ENCODE measurements at regions of chr12 and their contacts with region 1.

Region 1: GRCh38 chr12:76031537-76032073 is at the start of gene PHLDA1:
- DNase-seq: peak; percentile 98
- ATAC-seq: peak; percentile 81
- H3K4me3 Mint-ChIP-seq: peak within 1 kb of the TSS; percentile 89
- H3K27ac Mint-ChIP-seq: peak within 1 kb of the TSS; percentile 97
- H3K4me1 Mint-ChIP-seq: peaks cover 57% of the 10 kb centered on the region
- H3K27me3 Mint-ChIP-seq: peaks cover 4% of the 10 kb centered on the region
- total RNA-seq, gene PHLDA1: 36.8 to 95.6 TPM

Region 2: DNA sequence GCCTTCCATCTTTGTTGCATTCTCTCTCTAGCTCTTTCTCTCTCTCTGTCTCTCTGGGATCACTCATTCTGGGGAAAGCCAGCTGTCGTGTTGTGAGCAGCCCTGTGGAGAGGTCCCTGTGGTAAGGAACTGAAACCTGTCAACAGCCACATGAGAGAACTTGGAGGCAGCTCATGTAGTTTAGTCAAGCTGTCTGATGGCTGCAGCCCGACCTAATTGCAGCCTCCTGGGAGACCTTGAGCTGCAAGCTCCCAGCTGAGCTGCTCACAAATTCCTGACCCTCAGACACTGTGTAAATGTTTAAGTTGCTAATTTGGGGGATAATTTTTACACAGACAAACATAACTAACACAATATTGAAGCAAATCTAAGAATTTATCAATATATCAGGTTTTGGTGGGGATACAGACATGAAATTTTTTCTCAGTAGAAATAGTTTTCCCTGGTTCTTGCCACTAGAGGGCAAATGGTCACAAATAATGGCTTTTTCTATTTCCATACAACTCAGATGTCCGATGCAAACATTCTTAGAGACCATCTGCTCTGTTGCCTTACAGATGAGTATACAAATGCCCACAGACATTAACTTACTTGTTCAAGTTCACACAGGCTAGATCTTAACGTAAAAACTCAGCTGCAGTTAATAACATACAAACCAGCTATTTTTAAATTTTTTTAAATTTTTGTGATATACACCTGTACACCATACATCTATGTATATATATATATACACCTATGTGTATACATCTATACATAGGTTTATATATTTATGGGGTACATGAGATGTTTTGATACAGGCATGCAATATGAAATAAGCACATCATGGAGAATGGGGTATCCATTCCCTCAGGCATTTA is 504.7 kb before region 1 on chr12:
- CTCF ChIA-PET with region 1: interaction called, 42 read pairs
- DNase-seq: peak; percentile 58
- ATAC-seq: peak; percentile 76
- H3K4me3 Mint-ChIP-seq: no peak overlapping the region
- H3K27ac Mint-ChIP-seq: peak overlapping the region; percentile 54
- H3K4me1 Mint-ChIP-seq: peaks cover 10% of the 10 kb centered on the region
- H3K27me3 Mint-ChIP-seq: peaks cover 22% of the 10 kb centered on the region

Region 3: GRCh38 chr12:75923964-75924666 is 107.5 kb before region 1 on chr12:
- CTCF ChIA-PET with region 1: interaction called, 14 read pairs
- DNase-seq: no peak
- ATAC-seq: no peak
- H3K4me3 Mint-ChIP-seq: no peak overlapping the region
- H3K27ac Mint-ChIP-seq: peak overlapping the region; percentile 74
- H3K4me1 Mint-ChIP-seq: peaks cover 22% of the 10 kb centered on the region
- H3K27me3 Mint-ChIP-seq: no peaks in the 10 kb centered on the region

Region 4: DNA sequence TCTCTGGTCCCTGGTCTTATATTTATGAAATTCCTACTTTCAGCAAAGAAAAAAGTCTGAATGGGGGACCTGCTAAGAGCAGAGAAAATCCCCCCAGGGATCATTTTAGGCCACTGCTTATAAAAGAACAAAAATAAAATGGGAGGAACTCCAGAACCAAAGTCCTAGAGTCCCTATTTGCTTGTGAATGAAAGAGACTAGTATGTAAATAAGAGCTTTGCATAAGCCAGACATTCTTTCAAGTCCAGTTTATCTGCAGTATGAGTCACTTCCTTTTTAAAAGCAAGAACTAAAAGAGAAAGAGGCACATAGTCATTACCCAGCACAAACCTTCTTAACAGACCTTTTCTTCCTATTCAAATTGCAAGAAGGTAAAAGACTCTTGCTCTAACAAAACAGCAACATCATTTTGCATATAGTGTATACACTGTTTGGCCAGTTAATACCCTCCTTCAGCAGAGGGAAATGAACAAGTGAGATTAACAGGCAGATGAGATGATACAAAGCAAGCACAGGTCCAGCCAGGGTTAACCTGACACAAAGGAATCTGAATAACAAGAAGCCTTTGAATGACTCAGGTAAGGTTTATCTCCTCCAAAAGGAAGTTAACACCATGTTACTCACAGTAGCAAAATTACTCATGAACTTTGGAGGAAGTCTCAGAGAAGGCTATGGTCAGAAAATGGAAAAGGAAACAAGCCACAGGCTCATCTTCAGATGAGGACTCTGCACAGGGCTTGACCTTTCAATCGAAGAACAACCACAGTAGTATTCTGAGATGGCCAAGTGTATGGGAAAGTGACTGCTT is 87.3 kb before region 1 on chr12:
- CTCF ChIA-PET with region 1: interaction called, 14 read pairs
- DNase-seq: peak; percentile 52
- ATAC-seq: peak; percentile 90
- H3K4me3 Mint-ChIP-seq: peak overlapping the region; percentile 43
- H3K27ac Mint-ChIP-seq: peak overlapping the region; percentile 99
- H3K4me1 Mint-ChIP-seq: peaks cover 40% of the 10 kb centered on the region
- H3K27me3 Mint-ChIP-seq: no peaks in the 10 kb centered on the region

Region 5: GRCh38 chr12:75977952-75978671 is 53.5 kb before region 1 on chr12:
- CTCF ChIA-PET with region 1: interaction called, 37 read pairs
- DNase-seq: peak; percentile 93
- ATAC-seq: peak; percentile 91
- H3K4me3 Mint-ChIP-seq: peak overlapping the region; percentile 9
- H3K27ac Mint-ChIP-seq: peak overlapping the region; percentile 94
- H3K4me1 Mint-ChIP-seq: peaks cover 65% of the 10 kb centered on the region
- H3K27me3 Mint-ChIP-seq: no peaks in the 10 kb centered on the region

Region 6: DNA sequence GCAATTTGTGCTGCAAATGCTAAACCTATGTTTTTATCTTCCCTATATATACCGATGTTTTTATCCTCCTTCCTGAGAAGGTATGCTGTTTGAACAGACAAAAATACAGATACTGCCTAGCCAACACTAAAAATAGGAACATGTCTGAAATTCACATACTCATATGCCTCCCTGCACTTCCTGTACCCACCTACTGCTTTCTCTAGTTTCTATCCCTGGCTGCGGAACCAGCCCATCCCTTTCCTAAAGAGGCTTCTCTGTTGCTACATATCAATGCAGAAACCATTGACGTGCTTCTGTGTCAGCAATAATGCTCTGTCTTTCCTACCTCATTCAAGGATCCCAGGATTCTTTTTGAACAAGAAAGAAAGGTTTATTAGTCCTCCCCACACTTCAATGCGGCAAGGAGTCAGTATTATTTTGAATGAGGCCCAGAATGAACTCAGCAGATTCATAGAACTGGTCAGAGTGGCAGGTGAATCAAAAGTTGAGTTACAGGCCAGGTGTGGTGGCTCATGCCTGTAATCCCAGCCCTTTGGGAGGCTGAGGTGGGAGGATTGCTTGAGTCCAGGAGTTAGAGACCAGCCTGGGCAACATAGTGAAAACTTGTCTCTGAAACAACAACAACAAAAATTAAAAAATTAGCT is 120.7 kb after region 1 on chr12:
- CTCF ChIA-PET with region 1: no interaction called
- DNase-seq: no peak
- ATAC-seq: no peak
- H3K4me3 Mint-ChIP-seq: no peak overlapping the region
- H3K27ac Mint-ChIP-seq: no peak overlapping the region
- H3K4me1 Mint-ChIP-seq: peaks cover 8% of the 10 kb centered on the region
- H3K27me3 Mint-ChIP-seq: peaks cover 3% of the 10 kb centered on the region